ENCODE measurements at regions of chrX and their contacts with region 1.

Region 1: GRCh38 chrX:107171369-107172102 is 34.7 kb downstream of the NUP62CL start:
- DNase-seq: no peak
- H3K4me3 ChIP-seq: no peak overlapping the region
- H3K27ac ChIP-seq: no peak overlapping the region
- H3K4me1 ChIP-seq: no peaks in the 10 kb centered on the region
- H3K27me3 ChIP-seq: no peaks in the 10 kb centered on the region
- CTCF ChIP-seq: no peak
- POLR2A ChIP-seq: no peak

Region 2: GRCh38 chrX:105273136-105273730 is 1898.3 kb before region 1 on chrX:
- intact Hi-C with region 1: no loop called
- DNase-seq: no peak
- H3K4me3 ChIP-seq: no peak overlapping the region
- H3K27ac ChIP-seq: no peak overlapping the region
- H3K4me1 ChIP-seq: no peaks in the 10 kb centered on the region
- H3K27me3 ChIP-seq: no peaks in the 10 kb centered on the region
- CTCF ChIP-seq: no peak
- POLR2A ChIP-seq: no peak

Region 3: GRCh38 chrX:106564986-106565385 is 606.5 kb before region 1 on chrX:
- intact Hi-C with region 1: loop called (anchors 10 kb)
- DNase-seq: no peak
- H3K4me3 ChIP-seq: no peak overlapping the region
- H3K27ac ChIP-seq: no peak overlapping the region
- H3K4me1 ChIP-seq: no peaks in the 10 kb centered on the region
- H3K27me3 ChIP-seq: peaks cover 4% of the 10 kb centered on the region
- CTCF ChIP-seq: no peak
- POLR2A ChIP-seq: no peak